Heart right ventricle (tissue), 16 donors: ENCODE measurements at regions of chr17 and their contacts with region 1.

Region 1: DNA sequence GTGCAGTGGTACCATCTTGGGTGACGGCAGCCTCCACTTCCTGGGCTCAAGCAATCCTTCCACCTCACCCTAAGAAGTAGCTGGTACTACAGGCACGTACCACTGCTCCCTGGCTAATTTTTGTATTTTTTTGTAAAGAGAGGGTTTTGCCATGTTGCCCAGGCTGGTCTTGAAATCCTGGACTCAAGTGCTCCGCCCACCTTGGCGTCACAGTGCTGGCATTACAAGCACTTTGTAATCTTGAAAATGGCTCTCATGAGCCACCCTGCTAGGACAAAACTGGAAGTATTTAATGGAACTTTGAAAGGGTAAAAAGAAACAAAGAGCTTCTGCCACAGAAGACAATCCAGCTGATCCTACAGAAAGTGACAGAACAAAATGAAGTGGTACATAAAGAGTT is 9.2 kb downstream of the SUMO2 start:
- DNase-seq: no peak
- ATAC-seq: no peak
- H3K4me3 ChIP-seq: no peak overlapping the region
- H3K27ac ChIP-seq: no peak overlapping the region
- H3K4me1 ChIP-seq: peaks cover 0 to 21% (median 6%) of the 10 kb centered on the region in 9 donors
- H3K27me3 ChIP-seq: no peaks in the 10 kb centered on the region
- CTCF ChIP-seq: no peak

Region 2: GRCh38 chr17:75059369-75060345 is 113.9 kb before region 1 on chr17:
- intact Hi-C with region 1: loop called in 2 of 10 experiments (anchors 10 kb)
- DNase-seq: peak in 1 of 2 donors; percentile 55
- ATAC-seq: peak; percentile 50 to 94 (median 88)
- H3K4me3 ChIP-seq: no peak overlapping the region
- H3K27ac ChIP-seq: peak overlapping the region in 9 of 10 donors; percentile 40 to 76 (median 68)
- H3K4me1 ChIP-seq: peaks cover 0 to 20% (median 14%) of the 10 kb centered on the region in 9 donors
- H3K27me3 ChIP-seq: no peaks in the 10 kb centered on the region
- CTCF ChIP-seq: peak in 8 of 9 donors; percentile 9 to 69 (median 52)

Region 3: DNA sequence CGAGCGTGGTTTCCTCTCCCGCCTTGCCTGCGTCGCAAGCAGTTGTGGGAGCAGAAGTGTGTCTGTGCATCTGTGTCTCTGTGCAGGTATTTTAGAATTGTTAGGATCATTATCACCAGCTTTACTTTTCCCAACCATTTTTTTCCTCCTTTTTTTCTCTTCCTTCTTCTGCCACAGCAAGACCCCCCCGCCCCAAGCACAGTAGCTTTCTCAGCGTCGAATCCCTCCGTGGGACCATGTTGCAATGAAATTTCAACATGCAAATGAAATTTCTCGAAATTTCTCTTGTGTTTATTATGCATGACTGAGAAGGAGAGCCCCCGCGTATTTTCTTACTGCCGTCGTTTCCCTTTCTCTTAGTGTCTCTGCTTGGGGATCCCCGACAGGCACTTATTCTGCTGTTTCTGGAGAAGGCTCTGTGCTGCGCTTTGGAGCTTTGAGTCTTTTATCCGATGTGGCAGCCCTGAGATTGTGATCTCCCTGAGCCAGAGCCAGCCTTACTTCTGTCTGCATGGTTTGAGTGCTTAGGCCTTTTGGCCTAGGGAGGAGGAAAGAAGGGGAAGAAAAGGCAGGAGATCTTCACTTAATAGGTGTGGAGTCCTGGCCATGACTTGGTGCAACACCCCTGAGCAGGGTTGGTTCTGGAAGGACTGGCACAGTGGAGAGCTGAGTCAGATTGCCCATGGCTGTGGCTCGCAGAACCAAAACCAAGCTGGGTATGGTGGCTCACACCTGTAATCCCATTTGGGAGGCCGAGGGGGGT is 58.8 kb before region 1 on chr17:
- intact Hi-C with region 1: loop called in 8 of 10 experiments (anchors 2 to 10 kb)
- DNase-seq: no peak
- ATAC-seq: no peak
- H3K4me3 ChIP-seq: peak overlapping the region; percentile 14 to 66 (median 58)
- H3K27ac ChIP-seq: peak overlapping the region; percentile 55 to 96 (median 90)
- H3K4me1 ChIP-seq: peaks cover 0 to 61% (median 35%) of the 10 kb centered on the region in 9 donors
- H3K27me3 ChIP-seq: no peaks in the 10 kb centered on the region
- CTCF ChIP-seq: no peak